GM10248 (cell line): ENCODE measurements at regions of chr1 and their contacts with region 1.

Region 1: GRCh38 chr1:196148367-196148970 is 459.8 kb downstream of the KCNT2 start:
- DNase-seq: peak; percentile 20
- CTCF ChIP-seq: peak; percentile 44

Region 2: DNA sequence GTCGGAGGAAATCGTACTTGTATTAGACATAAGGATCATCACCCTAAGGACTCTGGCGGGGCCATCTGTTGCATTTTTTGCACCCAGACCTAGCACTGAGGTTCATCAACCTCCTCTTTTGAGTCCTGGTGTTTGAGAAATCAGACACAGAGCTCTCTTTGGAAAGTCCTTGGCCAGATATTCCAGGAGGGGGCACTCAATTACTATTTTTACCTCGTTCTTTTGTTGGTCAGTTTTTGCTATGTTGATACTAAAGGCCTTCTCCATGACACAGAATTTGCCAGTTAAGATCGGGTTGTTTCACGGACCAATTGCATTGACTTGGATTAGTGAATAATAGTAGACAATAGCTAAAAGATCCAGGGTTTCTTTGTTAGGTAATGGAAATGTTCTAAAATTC is 251.4 kb before region 1 on chr1:
- CTCF ChIA-PET with region 1: no interaction called
- POLR2A ChIA-PET with region 1: no interaction called
- DNase-seq: no peak
- CTCF ChIP-seq: no peak

Region 3: DNA sequence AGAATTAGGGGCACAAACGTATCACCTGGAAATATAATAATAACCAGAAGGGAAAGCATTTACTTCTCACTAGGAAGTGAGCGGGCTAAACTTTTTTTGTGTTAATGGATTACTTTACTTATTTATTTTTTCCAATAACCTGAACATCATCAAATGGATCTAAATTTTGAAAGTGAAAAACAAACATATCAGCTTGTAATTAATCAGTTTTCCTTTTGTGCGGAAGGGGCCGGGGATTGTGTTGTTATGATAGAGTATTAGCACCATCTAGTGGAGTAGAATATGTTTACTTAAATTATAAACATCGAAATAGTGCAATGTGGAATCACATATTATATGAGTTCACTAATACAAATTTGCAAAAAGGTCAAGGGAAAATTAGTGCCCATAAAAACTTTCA is 512.4 kb after region 1 on chr1:
- CTCF ChIA-PET with region 1: interaction called, 23 read pairs
- POLR2A ChIA-PET with region 1: no interaction called
- DNase-seq: peak; percentile 23
- CTCF ChIP-seq: peak; percentile 34